Right ventricle myocardium superior (tissue), 1 donor: ENCODE measurements at regions of chr12 and their contacts with region 1.

Region 1: DNA sequence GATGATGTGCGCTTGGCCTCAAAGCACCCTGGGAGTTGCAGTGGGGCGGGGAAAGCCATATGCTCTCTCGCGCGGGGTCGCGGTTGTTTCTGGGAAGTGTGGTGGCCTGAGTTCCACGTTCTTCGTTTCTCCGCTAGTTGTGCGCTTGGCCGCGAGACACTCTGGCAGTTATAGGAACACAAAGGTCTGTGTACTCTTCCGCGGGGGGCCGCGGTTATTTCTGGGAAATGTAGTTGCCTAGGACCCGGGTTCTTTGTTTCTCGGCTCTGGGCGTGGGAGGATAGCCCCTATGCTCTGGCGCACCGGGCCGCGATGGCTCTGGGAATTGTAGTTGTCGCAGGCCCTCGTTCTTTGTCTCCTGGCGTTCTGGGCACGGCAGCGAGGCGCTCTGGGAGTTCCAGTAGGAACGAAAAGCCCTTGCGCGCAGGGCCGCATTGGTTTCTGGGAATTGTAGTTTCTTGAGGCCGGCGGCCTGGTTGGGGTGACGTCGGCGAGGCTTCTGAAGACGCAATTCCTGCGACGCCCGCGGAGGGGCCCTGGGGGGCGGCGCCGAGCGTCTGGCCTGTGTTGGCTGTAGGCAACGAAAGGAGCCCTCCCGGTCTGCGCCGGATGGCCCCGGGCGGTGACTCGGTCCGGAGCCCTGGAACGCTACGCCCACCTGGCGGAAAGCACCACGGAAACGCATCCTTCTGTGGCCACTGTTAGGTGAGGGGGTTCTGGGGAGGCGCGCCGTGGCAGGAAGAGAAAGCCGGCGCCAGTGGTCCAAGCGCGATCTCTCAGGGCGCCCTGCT is at the start of gene ZNF140:
- DNase-seq: peak; percentile 98
- ATAC-seq: peak; percentile 93
- total RNA-seq, gene ZNF140: 6.1 TPM

Region 2: DNA sequence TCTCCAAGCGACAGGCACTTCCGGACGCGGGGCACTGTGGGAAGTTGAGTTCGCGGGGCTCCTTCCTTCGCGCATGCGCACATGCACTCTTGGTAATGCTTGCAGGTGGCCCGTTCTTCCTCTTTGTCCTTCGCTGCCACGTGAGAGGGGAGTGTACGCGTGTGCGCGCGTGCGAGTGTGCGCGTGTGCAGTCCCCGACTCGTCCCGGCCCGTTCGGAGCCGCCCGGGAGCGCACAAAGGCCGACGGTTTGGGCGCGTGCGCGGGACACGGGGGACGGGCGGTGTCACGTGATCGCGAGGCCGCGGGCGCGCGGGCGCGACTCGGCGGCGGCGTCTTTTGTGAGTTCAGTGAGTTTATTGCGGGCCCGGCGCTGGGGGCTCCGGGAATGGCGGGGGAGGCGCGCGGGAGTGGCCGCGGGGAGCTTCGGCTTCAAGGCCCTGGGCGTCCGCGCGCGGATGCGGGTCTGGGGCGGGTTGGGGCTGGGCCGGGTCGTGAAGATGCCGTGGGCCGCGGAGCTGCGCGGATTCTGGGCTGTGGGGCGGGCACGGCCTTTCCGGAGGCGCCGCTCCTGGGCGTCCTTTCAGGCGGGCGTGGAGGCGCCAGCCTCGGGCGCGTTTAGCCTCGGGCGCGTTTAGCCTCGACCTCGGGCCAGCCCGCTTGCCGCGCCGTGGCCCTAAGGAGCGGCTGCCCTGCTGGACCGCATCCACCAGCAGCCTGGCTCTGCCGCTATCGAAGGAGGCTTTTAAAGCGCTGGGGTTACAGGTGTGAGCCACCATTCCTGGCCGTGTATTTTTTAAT is 43.2 kb before region 1 on chr12 and contains the start of gene ZNF84:
- intact Hi-C with region 1: loop called (anchors 5 kb)
- DNase-seq: peak; percentile 97
- ATAC-seq: peak; percentile 98
- total RNA-seq, gene ZNF84: 16.9 TPM

Region 3: GRCh38 chr12:133120385-133121191 is 40.0 kb after region 1 on chr12:
- intact Hi-C with region 1: loop called (anchors 5 kb)
- DNase-seq: no peak
- ATAC-seq: no peak